ENCODE measurements at regions of chr15 and their contacts with region 1.

Region 1: GRCh38 chr15:60444289-60444912 is 34.5 kb downstream of the ICE2 start:
- DNase-seq: peak; percentile 73
- H3K4me3 ChIP-seq: no peak overlapping the region
- H3K27ac ChIP-seq: no peak overlapping the region
- H3K4me1 ChIP-seq: peaks cover 32% of the 10 kb centered on the region
- H3K27me3 ChIP-seq: no peaks in the 10 kb centered on the region

Region 2: DNA sequence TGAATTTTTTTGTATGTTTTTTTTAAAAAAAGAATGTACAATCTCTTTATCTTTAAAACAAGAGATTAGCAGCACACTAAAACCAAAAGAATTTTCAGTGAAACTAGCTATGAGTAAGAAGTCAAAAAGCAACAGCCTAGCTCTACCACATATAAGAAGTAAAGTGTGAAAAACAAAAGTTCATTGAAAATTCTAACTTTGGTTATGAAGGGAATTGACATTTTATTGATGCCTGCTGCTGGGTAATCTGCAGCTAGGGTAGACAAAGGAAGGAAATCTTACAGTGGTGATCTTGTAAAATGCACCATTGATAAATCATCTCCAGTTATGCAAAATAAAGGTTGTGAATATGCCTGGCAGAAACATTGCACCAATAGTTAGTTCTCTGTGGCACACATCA is 478.1 kb before region 1 on chr15:
- in situ Hi-C with region 1: no loop called
- DNase-seq: no peak
- H3K4me3 ChIP-seq: no peak overlapping the region
- H3K27ac ChIP-seq: no peak overlapping the region
- H3K4me1 ChIP-seq: no peaks in the 10 kb centered on the region
- H3K27me3 ChIP-seq: no peaks in the 10 kb centered on the region

Region 3: DNA sequence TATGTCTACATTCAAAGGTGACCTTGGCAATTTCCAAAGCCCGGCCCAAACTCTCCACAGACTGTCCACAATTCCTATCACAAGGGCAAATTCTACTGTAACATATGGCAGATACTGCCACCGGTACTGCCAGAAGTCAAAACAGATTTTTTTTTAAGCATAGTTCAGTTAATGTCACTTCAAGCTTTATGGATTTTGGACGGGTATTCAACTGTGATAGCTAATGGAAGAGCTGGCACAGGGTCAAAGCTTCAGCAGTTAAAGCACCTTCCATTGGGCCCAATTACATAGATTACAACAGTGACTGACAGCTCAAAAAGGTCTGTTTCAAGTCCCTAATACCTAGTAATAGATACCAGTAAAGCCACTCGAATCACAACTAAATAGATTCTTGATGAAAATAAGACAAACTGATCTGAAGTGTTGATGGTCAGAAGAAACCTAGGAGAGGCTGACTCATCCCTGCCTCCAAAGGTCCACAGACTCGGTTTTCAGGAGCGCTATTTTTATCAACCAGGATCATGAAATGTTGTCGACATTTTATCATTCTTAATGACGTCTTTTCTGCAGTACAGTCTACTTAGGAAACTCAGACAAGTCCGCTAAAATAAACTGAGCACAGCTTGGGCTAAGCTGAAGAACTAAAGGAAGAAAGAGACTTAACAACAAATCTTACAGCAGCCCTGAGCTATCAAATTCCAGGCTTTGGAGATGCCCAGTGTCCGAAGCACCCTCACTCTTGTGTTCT is 85.3 kb before region 1 on chr15:
- in situ Hi-C with region 1: loop called (anchors 10 kb)
- DNase-seq: peak; percentile 80
- H3K4me3 ChIP-seq: no peak overlapping the region
- H3K27ac ChIP-seq: peak overlapping the region; percentile 98
- H3K4me1 ChIP-seq: peaks cover 77% of the 10 kb centered on the region
- H3K27me3 ChIP-seq: no peaks in the 10 kb centered on the region

Measured in GM23248 (cell line).